Activated naive CD4-positive, alpha-beta T cell treated with anti-CD3 and anti-CD28 coated beads, Interleukin-2, amount 10 ng/mL, durations not matched to agents 7 days and 5 days (primary cell): ENCODE measurements at regions of chr1 and their contacts with region 1.

Region 1: DNA sequence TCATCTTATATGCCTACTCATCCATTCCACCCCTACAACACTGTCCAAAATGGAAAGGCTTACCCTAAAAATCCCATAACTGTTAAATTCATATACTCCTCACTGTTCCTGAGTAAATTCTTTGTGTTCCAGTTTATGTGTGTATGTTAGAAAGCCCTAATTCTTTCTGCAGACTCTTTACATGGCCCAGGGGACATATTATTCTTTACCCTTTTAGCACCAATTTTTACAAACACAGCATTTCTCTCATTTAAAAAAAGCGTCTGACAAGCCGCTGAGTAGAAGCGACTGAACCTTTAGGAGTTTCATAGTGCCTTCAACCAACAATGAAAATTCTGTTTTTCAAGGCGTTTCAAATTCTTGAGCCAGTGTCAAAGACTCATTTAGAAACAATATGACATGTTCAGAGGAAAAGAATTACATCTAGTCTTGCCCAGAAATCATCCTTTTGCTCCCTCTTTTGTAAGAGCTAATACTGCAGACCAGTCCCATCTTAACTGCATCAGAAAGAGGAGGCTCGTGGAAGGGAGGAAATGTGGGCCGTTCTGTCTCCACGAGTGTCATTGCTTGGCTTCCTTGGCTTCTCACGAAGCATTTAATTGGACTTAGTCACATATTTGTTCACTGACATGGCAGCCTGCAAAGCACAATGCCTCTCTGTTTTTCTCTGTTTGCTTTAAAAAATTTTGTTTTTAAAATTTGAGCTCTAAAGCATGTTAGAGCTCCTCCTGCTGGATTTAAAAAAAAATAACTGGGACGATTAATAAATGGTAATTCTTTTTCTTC is 21.3 kb upstream of the C1orf105 start:
- DNase-seq: peak; percentile 33
- H3K4me3 Mint-ChIP-seq: peak overlapping the region; percentile 42
- H3K27ac Mint-ChIP-seq: peak overlapping the region; percentile 62
- H3K4me1 Mint-ChIP-seq: peaks cover 59% of the 10 kb centered on the region
- H3K27me3 Mint-ChIP-seq: no peaks in the 10 kb centered on the region

Region 2: GRCh38 chr1:172002725-172003345 is 396.3 kb before region 1 on chr1:
- CTCF ChIA-PET with region 1: interaction called, 17 read pairs
- DNase-seq: peak; percentile 41
- H3K4me3 Mint-ChIP-seq: no peak overlapping the region
- H3K27ac Mint-ChIP-seq: no peak overlapping the region
- H3K4me1 Mint-ChIP-seq: no peaks in the 10 kb centered on the region
- H3K27me3 Mint-ChIP-seq: no peaks in the 10 kb centered on the region

Region 3: DNA sequence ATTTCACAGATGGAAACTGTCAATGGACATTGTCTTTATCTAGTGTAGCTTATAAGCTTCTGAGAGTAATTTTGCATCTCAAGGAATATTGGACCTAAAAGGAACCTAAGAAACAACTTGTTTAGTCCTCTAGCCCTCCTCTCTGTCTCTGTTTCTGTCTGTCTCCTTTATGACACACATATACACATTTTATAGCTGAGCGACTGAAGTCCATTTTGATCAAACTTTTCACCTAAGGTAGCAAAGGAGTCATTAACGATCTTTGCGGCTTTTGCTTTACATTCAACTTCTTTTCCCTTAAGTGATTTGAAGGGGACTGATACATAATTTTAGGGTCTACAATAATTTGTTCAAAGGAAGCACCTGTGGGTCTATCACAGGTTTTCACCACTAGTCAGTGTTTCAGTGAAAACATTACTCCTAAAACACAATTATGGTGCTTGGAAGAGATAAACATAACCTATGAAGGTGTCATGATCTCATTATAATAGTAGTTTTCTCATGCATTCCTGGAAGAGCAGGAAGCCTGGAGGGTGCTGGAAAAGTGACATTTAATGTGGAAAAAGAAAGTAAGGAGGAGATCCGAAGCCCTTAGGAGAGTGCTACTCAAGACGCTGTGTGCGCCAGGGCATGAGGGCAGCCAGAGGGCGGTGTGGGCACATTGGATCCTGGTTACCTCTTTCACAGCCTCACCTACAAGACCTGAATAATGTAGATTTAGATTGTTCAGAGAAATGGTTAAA is 309.2 kb before region 1 on chr1:
- CTCF ChIA-PET with region 1: interaction called, 39 read pairs
- DNase-seq: peak; percentile 76
- H3K4me3 Mint-ChIP-seq: no peak overlapping the region
- H3K27ac Mint-ChIP-seq: no peak overlapping the region
- H3K4me1 Mint-ChIP-seq: peaks cover 4% of the 10 kb centered on the region
- H3K27me3 Mint-ChIP-seq: no peaks in the 10 kb centered on the region

Region 4: GRCh38 chr1:172338295-172338735 is 60.8 kb before region 1 on chr1:
- CTCF ChIA-PET with region 1: interaction called, 15 read pairs
- DNase-seq: peak; percentile 24
- H3K4me3 Mint-ChIP-seq: no peak overlapping the region
- H3K27ac Mint-ChIP-seq: no peak overlapping the region
- H3K4me1 Mint-ChIP-seq: peaks cover 31% of the 10 kb centered on the region
- H3K27me3 Mint-ChIP-seq: no peaks in the 10 kb centered on the region

Region 5: GRCh38 chr1:172357753-172358385 is 41.3 kb before region 1 on chr1:
- CTCF ChIA-PET with region 1: interaction called, 11 read pairs
- DNase-seq: no peak
- H3K4me3 Mint-ChIP-seq: no peak overlapping the region
- H3K27ac Mint-ChIP-seq: peak overlapping the region; percentile 86
- H3K4me1 Mint-ChIP-seq: peaks cover 41% of the 10 kb centered on the region
- H3K27me3 Mint-ChIP-seq: no peaks in the 10 kb centered on the region

Region 6: GRCh38 chr1:172883107-172883791 is 484.1 kb after region 1 on chr1:
- CTCF ChIA-PET with region 1: no interaction called
- DNase-seq: no peak
- H3K4me3 Mint-ChIP-seq: no peak overlapping the region
- H3K27ac Mint-ChIP-seq: no peak overlapping the region
- H3K4me1 Mint-ChIP-seq: peaks cover 15% of the 10 kb centered on the region
- H3K27me3 Mint-ChIP-seq: peaks cover 63% of the 10 kb centered on the region